Activated CD4-positive, alpha-beta T cell treated with anti-CD3 and anti-CD28 coated beads, Interleukin-2, amount 10 ng/mL, durations not matched to agents 24 days and 14 days (primary cell): ENCODE measurements at regions of chr6 and their contacts with region 1.

Region 1: DNA sequence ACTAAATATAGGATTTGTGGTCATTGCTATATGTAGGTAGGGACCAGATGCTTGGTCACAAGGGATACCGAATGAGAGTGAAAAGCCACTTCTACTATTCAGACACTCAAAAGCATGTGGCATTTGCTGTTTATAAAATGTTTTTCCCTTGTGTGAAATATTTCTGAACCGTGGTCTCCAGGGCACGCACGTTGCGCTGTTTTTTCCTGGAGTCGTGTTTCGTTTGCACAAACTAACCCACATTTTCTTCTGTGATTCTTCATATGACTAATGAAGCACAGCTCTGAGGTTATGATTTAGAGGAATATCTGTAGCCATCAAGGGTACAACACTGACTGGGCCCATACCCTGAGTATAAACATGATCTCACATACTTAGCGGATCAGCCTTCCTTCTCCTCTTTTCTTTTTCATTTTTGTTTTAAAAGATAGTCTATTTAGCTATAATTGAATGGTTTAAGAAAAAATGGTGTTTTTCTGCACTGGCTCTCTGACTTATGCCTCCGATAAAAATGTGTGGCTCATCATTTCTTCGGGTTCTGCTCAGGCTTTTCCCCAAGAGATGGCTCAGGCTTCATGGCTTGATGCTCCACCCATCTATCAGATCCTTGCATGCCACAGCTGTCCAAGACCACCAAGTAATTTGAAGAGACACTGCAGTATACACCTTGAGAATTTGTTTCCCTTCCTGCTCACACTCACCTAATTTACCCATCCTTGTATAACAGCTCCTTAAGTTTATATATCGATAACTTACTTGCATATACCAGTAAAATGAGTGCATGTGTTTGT is 59.9 kb upstream of the HBS1L start:
- DNase-seq: peak; percentile 85
- H3K4me3 Mint-ChIP-seq: peak overlapping the region; percentile 64
- H3K27ac Mint-ChIP-seq: peak overlapping the region; percentile 96
- H3K4me1 Mint-ChIP-seq: peaks cover 69% of the 10 kb centered on the region
- H3K27me3 Mint-ChIP-seq: no peaks in the 10 kb centered on the region

Region 2: DNA sequence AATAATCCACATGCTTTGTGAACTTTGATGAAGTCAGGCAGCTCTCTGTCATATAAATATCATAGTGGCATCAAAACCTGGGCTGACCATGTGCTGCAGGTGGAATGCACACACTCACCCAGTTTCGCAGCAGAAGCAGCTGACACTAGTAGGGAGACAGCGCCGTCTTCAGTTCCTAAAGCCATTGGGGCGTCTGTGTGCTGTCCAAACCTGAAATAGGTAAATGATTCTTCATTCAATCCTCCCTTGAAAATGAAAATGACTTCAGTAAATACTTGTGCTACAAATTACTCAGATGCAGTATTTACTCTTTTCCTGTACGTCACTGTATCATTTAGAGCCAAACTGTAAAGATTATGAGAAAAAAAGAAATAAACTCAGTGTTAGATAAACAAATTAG is 1745.9 kb before region 1 on chr6:
- intact Hi-C with region 1: no loop called
- DNase-seq: no peak
- H3K4me3 Mint-ChIP-seq: no peak overlapping the region
- H3K27ac Mint-ChIP-seq: no peak overlapping the region
- H3K4me1 Mint-ChIP-seq: no peaks in the 10 kb centered on the region
- H3K27me3 Mint-ChIP-seq: no peaks in the 10 kb centered on the region

Region 3: GRCh38 chr6:135014353-135014832 is 100.2 kb before region 1 on chr6:
- intact Hi-C with region 1: loop called (anchors 1 kb)
- DNase-seq: peak; percentile 70
- H3K4me3 Mint-ChIP-seq: peak overlapping the region; percentile 70
- H3K27ac Mint-ChIP-seq: peak overlapping the region; percentile 78
- H3K4me1 Mint-ChIP-seq: peaks cover 47% of the 10 kb centered on the region
- H3K27me3 Mint-ChIP-seq: no peaks in the 10 kb centered on the region

Region 4: DNA sequence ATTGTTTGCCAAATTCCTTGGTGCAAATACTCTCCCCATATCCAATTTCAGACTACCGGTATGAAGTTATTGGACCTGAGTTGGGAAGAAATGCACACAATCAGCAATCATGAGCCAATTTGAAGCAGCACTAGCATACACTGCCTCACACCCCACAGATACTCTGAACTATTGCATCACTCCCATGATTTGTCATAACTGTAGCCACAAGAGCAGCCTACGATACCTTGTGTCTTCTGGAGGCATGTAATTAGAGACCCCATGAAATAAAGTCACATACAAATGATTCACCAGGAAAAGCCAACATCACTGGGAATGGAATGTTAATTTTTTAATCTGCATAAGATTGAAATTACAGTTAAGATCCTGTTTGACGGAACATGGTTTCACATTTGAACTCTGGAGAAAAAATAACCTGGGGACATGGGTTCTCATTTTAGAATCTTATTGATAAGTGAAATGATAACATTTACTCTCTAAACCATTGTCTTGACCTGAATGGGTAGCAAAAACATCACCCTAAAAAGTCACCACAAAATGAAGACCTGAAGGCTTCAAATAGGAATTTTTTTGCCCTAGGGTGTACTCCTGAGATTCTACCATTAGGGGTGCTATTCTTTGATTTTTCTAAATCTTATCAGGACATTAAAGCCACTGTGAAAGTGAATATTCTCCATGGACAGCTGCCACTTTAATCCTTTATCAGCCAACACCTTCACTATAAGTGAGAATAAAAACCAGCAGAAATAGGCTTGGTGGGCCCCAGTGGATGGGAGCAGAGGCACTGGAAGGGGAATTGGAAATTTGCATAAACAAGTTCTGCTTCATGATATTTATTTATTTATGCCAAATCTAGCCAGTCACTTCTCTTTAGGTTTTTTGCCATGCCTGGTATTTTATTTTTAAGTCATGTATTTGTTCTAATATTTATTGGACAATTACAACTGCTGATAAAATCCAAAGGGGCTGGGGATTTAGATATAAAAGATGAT is 25.4 kb before region 1 on chr6:
- intact Hi-C with region 1: loop called (anchors 1 kb)
- DNase-seq: peak; percentile 85
- H3K4me3 Mint-ChIP-seq: peak overlapping the region; percentile 59
- H3K27ac Mint-ChIP-seq: peak overlapping the region; percentile 90
- H3K4me1 Mint-ChIP-seq: peaks cover 75% of the 10 kb centered on the region
- H3K27me3 Mint-ChIP-seq: no peaks in the 10 kb centered on the region

Region 5: GRCh38 chr6:135145063-135145800 is 30.7 kb after region 1 on chr6:
- intact Hi-C with region 1: loop called (anchors 1 kb)
- DNase-seq: peak; percentile 80
- H3K4me3 Mint-ChIP-seq: peak overlapping the region; percentile 72
- H3K27ac Mint-ChIP-seq: peak overlapping the region; percentile 86
- H3K4me1 Mint-ChIP-seq: peaks cover 54% of the 10 kb centered on the region
- H3K27me3 Mint-ChIP-seq: no peaks in the 10 kb centered on the region

Region 6: DNA sequence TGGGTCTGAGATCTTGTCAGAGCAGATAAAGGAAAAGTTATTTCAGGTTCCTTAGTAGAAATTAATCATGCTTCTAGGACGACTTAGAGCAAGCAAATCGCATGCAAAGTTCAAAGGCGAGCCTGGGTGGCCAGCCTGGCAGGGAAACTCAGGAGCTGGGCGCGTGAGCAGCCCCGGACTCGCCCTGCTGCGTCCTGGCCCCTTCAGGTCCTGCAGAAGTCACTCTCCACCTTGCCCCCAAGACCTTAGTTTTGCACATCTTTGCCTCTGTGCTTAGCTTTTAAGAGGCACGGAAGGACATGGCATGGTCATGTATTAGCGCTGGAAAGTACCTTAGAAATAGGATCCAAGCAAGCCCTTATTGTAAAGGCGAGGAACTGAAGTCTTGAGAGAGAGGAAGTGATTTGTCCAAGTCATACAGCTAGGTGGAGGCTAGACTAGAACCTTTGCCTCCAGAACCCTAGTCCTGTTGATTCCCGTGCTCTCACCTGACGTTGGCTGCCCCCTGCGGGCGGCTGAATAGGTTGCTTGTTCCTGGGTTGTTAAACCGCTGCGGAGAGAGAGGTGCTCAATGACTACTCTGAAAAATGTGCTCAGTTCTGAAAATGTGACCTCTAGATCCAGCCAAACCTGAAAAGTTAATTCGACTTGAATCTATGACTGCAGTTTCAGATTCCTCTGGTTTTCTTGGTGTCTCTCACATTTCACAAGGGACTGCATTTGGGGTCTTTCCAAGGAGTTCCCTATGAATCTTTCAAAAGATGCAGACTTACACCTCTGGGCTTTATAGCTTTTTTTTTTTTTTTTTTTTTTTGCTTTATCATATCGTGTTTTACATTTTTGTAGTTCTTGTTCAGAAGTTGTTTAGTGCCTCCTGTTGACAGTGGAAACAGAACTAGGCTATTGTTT is 69.2 kb after region 1 on chr6:
- intact Hi-C with region 1: loop called (anchors 1 kb)
- DNase-seq: peak; percentile 94
- H3K4me3 Mint-ChIP-seq: peak overlapping the region; percentile 92
- H3K27ac Mint-ChIP-seq: peak overlapping the region; percentile 89
- H3K4me1 Mint-ChIP-seq: peaks cover 35% of the 10 kb centered on the region
- H3K27me3 Mint-ChIP-seq: no peaks in the 10 kb centered on the region